ENCODE measurements at regions of chr15 and their contacts with region 1.

Region 1: GRCh38 chr15:85080329-85080728 is 98.7 kb downstream of the PDE8A start:
- DNase-seq: no peak
- ATAC-seq: no peak
- H3K4me3 ChIP-seq: no peak overlapping the region
- H3K27ac ChIP-seq: no peak overlapping the region
- H3K4me1 ChIP-seq: no peaks in the 10 kb centered on the region
- H3K27me3 ChIP-seq: no peaks in the 10 kb centered on the region
- CTCF ChIP-seq: no peak
- POLR2A ChIP-seq: no peak

Region 2: DNA sequence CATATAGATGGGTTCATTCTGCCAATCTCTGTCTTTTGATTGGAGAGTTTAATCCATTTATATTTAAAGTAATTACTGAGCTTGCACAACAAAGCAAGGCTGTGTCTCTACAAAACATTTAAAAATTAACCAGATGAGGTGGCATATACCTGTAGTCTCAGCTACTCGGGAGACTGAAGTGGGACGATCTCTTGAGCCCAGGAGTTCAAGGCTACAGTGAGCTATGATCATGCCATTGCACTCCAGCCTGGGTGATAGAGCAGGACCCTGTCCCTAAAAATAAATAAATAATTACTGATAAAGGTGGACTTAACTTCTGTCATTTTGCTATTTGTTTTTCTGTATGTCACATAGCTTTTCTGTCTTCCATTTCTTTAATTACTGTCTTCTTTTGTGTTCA is 20.6 kb before region 1 on chr15:
- intact Hi-C with region 1: loop called in 1 of 10 experiments (anchors 2 kb)
- DNase-seq: no peak
- ATAC-seq: no peak
- H3K4me3 ChIP-seq: no peak overlapping the region
- H3K27ac ChIP-seq: no peak overlapping the region
- H3K4me1 ChIP-seq: peaks cover 0 to 22% (median 12%) of the 10 kb centered on the region in 12 donors
- H3K27me3 ChIP-seq: no peaks in the 10 kb centered on the region
- CTCF ChIP-seq: no peak
- POLR2A ChIP-seq: no peak

Region 3: DNA sequence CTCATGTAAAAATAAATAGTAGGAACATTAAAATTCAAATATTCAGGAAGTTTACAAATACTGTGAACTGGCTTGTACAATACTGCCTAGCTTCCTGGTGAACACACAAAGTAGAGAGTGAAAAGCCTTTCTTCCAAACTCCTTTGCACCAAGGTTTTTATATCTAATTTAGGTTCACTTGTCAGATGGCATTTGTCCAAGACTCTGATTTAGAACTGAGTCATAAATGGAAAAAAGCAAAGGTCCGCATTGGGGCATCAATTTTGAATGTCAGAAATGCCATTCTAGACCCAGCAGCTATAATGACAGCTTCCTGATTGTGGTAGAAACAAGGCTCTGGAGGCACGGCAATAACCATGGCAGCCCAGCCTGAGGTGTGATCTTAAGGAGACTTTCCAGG is 62.0 kb after region 1 on chr15:
- intact Hi-C with region 1: no loop called
- DNase-seq: no peak
- ATAC-seq: no peak
- H3K4me3 ChIP-seq: no peak overlapping the region
- H3K27ac ChIP-seq: no peak overlapping the region
- H3K4me1 ChIP-seq: peaks cover 0 to 5% (median 0%) of the 10 kb centered on the region in 12 donors
- H3K27me3 ChIP-seq: no peaks in the 10 kb centered on the region
- CTCF ChIP-seq: no peak
- POLR2A ChIP-seq: no peak